ENCODE measurements at regions of chr2 and their contacts with region 1.

Region 1: GRCh38 chr2:65186872-65187851 is 40.5 kb upstream of the ACTR2 start:
- DNase-seq: peak; percentile 69
- ATAC-seq: peak; percentile 98
- H3K4me3 ChIP-seq: no peak overlapping the region
- H3K27ac ChIP-seq: no peak overlapping the region
- H3K4me1 ChIP-seq: no peaks in the 10 kb centered on the region
- H3K27me3 ChIP-seq: peaks cover 6% of the 10 kb centered on the region; the same call in 1 of the 2 replicates
- CTCF ChIP-seq: peak; percentile 94

Region 2: DNA sequence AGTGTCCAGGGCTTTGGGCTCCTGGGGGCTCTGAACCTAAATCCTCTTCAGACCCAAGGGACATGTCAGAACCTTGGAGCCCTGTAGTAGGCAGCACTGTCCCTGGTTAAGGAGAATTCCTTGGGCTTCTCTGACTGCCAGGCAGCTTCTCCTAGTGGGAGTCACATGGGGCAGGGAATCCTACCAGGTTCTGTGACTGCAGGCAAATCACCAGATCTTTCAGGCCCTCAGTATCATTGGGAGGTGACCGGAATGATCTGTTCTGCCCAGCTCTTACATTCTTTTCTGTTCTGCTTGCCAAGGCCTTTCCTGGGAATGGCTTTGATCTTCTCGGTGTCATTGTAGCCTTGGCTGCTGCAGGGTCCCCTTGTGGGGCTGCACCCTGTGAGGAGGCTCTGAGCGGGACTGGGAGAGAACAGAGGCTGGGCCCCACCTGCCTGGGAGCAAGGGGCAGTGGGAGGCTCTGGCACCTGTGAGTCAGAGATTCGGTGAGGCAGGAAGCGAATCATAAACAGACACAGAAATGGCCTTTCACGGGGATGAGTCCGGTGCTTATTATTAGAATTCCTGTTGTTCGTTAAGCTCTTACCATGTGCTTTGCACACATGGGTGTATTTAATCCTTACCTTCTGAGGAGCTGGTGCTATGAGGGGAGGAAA is 116.9 kb before region 1 on chr2:
- CTCF ChIA-PET with region 1: no interaction called
- POLR2A ChIA-PET with region 1: no interaction called
- in situ Hi-C with region 1: no loop called
- intact Hi-C with region 1: loop called (anchors 5 kb)
- DNase-seq: no peak
- ATAC-seq: peak; percentile 54
- H3K4me3 ChIP-seq: no peak overlapping the region
- H3K27ac ChIP-seq: 0 out of 2 replicates have a peak overlapping the region, but pooled peaks have one; percentile 12
- H3K4me1 ChIP-seq: peaks cover 12% of the 10 kb centered on the region
- H3K27me3 ChIP-seq: no peaks in the 10 kb centered on the region
- CTCF ChIP-seq: peak; percentile 44

Region 3: DNA sequence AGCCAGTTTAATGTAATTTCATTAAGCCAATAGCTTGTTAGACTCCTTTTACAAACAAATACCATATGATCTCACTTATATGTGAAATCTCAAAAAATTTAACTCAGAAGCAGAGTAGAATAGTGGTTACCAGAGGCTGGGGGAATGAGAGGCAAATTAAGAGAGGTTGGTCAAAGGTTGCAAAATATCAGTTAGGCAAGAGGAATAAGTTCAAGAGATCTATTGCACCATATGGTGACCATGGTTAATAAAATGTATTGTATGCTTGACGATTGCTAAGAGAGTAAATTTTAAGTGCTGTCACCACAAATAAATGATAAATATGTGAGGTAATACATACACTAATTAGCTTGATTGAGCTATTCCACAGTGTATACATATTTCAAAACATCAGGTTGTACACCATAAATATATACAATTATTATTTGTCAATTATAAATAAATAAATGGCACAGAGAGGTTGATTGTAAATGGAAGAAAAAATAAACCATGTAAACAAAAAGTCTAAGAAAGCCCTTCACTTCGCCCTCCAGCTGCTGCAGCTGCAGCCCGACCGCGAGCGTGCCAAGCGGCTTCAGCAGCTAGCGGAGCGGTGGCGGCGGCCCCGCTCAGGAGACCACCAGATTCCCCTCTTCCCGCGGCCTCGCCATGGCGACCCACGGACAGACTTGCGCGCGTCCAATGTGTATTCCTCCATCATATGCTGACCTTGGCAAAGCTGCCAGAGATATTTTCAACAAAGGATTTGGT is 17.5 kb after region 1 on chr2:
- CTCF ChIA-PET with region 1: no interaction called
- POLR2A ChIA-PET with region 1: interaction called, 10 read pairs
- in situ Hi-C with region 1: no loop called
- intact Hi-C with region 1: no loop called
- DNase-seq: no peak
- ATAC-seq: no peak
- H3K4me3 ChIP-seq: peak overlapping the region in 1 of 2 experiments; percentile 21; a peak in 2 of 4 replicates
- H3K27ac ChIP-seq: no peak overlapping the region
- H3K4me1 ChIP-seq: no peaks in the 10 kb centered on the region
- H3K27me3 ChIP-seq: peaks cover 4% of the 10 kb centered on the region
- CTCF ChIP-seq: no peak